GM12878 (cell line): ENCODE measurements at regions of chr6 and their contacts with region 1.

Region 1: DNA sequence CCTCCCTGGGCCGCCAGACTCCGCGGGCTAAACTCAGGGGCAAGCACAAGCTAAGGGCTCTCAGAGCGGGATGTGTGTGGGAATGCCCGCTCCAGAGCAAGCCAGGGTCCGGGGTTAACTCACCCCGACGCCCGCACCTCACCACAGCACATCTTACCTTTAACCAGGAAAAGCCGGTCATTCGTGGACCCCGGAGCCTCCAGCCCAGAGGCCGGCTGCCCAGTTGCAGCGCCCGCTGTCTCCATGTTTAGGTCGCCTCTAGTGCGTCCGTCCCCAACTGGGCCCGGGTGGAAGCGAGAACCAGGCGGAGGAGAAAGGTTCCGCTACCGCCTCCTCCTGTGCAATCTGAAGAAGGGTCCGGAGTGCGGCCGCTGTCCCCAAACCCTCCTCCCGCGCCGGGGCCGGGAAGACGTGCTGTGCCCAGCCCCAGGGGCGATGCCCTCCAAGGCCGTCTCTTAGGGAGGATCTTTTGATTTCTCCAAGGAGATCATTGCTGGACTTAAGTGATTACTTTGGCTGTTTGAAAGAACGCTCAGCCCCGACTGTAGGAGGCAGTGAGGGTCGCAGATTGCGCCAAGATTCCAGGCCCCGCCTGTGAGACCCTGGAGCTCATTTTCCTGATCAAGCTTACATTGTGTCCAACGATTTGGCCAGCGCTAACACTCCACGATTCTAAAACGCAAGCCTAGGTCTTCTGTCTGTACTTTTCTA is at the start of gene TMEM242:
- DNase-seq: peak; percentile 74
- ATAC-seq: peak; percentile 91
- H3K4me3 ChIP-seq: peak within 1 kb of the TSS; percentile 86
- H3K27ac ChIP-seq: peak within 1 kb of the TSS; percentile 49
- H3K4me1 ChIP-seq: peaks cover 9% of the 10 kb centered on the region
- H3K27me3 ChIP-seq: no peaks in the 10 kb centered on the region
- CTCF ChIP-seq: peak in 2 of 3 experiments; percentile 13 to 14; a peak in 1 of 6 replicates
- EP300 ChIP-seq: no peak
- POLR2A ChIP-seq: peak; percentile 96
- RAD21 ChIP-seq: no peak; the same call in 1 of the 2 replicates
- polyA plus RNA-seq, gene TMEM242: 6.1 to 6.2 TPM

Region 2: GRCh38 chr6:156866220-156867015 is 457.0 kb before region 1 on chr6:
- CTCF ChIA-PET with region 1: no interaction called
- POLR2A ChIA-PET with region 1: no interaction called
- RAD21 ChIA-PET with region 1: no interaction called
- SMC1A ChIA-PET with region 1: no interaction called
- in situ Hi-C with region 1: no loop called
- intact Hi-C with region 1: no loop called
- DNase-seq: no peak
- ATAC-seq: peak; percentile 85
- H3K4me3 ChIP-seq: 0 out of 2 replicates have a peak overlapping the region, but pooled peaks have one; percentile 18
- H3K27ac ChIP-seq: peak overlapping the region; percentile 45
- H3K4me1 ChIP-seq: peaks cover 31% of the 10 kb centered on the region
- H3K27me3 ChIP-seq: no peaks in the 10 kb centered on the region
- CTCF ChIP-seq: peak in 1 of 3 experiments; percentile 12; a peak in 1 of 6 replicates
- EP300 ChIP-seq: 0 out of 4 replicates have a peak, but pooled peaks of 1 of the 2 experiments have one; percentile 24
- POLR2A ChIP-seq: no peak
- RAD21 ChIP-seq: peak; percentile 41

Region 3: GRCh38 chr6:157298216-157298724 is 25.1 kb before region 1 on chr6:
- CTCF ChIA-PET with region 1: no interaction called
- POLR2A ChIA-PET with region 1: no interaction called
- RAD21 ChIA-PET with region 1: no interaction called
- SMC1A ChIA-PET with region 1: no interaction called
- in situ Hi-C with region 1: no loop called
- intact Hi-C with region 1: no loop called
- DNase-seq: no peak
- ATAC-seq: no peak
- H3K4me3 ChIP-seq: no peak overlapping the region
- H3K27ac ChIP-seq: no peak overlapping the region
- H3K4me1 ChIP-seq: no peaks in the 10 kb centered on the region
- H3K27me3 ChIP-seq: no peaks in the 10 kb centered on the region
- CTCF ChIP-seq: no peak
- EP300 ChIP-seq: no peak
- POLR2A ChIP-seq: no peak
- RAD21 ChIP-seq: no peak

Region 4: DNA sequence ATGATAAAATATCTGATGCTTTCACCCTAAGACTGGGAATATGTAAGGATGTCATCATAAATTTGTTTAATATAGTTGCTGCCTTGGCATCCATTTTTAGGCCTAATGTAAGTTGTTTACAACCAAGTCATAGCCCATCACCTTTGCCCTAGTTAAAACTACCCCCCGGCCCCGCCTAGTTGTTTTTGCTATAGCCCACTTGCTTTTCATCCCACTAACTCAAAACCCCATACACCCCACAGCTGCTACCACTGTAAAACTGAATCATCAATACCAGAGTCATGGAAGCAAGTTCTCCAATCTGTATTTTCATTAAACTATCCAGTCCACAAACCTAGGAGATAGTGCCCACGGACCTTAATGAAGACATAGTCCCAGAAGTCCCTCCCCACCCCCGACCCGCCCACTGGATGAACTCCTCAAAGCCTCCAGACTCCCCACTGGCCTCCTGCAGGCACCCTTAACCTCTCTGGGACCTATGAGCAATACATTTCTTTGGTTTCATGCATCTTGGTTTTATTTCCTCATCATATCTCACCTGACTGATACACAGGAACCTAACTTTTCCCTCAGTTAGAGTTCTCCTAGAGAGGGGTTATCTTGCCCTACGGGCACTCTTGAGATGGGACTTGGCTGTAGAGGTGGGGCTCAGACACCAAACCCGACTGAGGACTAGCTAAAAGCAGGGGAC is 45.1 kb after region 1 on chr6:
- CTCF ChIA-PET with region 1: interaction called, 4 read pairs
- POLR2A ChIA-PET with region 1: interaction called, 6 read pairs
- RAD21 ChIA-PET with region 1: interaction called, 13 read pairs
- SMC1A ChIA-PET with region 1: interaction called, 5 read pairs
- in situ Hi-C with region 1: no loop called
- intact Hi-C with region 1: loop called (anchors 2 kb)
- DNase-seq: no peak
- ATAC-seq: peak; percentile 49
- H3K4me3 ChIP-seq: no peak overlapping the region
- H3K27ac ChIP-seq: no peak overlapping the region
- H3K4me1 ChIP-seq: peaks cover 15% of the 10 kb centered on the region
- H3K27me3 ChIP-seq: peaks cover 0 to 12% of the 10 kb centered on the region in 2 experiments; a peak in 3 of 4 replicates
- CTCF ChIP-seq: no peak
- EP300 ChIP-seq: no peak
- POLR2A ChIP-seq: no peak
- RAD21 ChIP-seq: no peak

Region 5: GRCh38 chr6:157385482-157385881 is 62.1 kb after region 1 on chr6:
- CTCF ChIA-PET with region 1: interaction called, 17 read pairs
- POLR2A ChIA-PET with region 1: interaction called, 7 read pairs
- RAD21 ChIA-PET with region 1: interaction called, 20 read pairs
- SMC1A ChIA-PET with region 1: interaction called, 34 read pairs
- in situ Hi-C with region 1: no loop called
- intact Hi-C with region 1: loop called (anchors 2 kb)
- DNase-seq: peak; percentile 44
- ATAC-seq: peak; percentile 45
- H3K4me3 ChIP-seq: no peak overlapping the region
- H3K27ac ChIP-seq: no peak overlapping the region
- H3K4me1 ChIP-seq: no peaks in the 10 kb centered on the region
- H3K27me3 ChIP-seq: peaks cover 0 to 4% of the 10 kb centered on the region in 2 experiments; a peak in 1 of 4 replicates
- CTCF ChIP-seq: no peak
- EP300 ChIP-seq: peak; percentile 48 to 52; a peak in 2 of 4 replicates
- POLR2A ChIP-seq: no peak
- RAD21 ChIP-seq: no peak

Region 6: GRCh38 chr6:157571269-157571668 is 247.9 kb after region 1 on chr6:
- CTCF ChIA-PET with region 1: interaction called, 13 read pairs
- POLR2A ChIA-PET with region 1: interaction called, 5 read pairs
- RAD21 ChIA-PET with region 1: interaction called, 19 read pairs
- SMC1A ChIA-PET with region 1: interaction called, 7 read pairs
- in situ Hi-C with region 1: no loop called
- intact Hi-C with region 1: no loop called
- DNase-seq: peak; percentile 68
- ATAC-seq: peak; percentile 69
- H3K4me3 ChIP-seq: no peak overlapping the region
- H3K27ac ChIP-seq: peak overlapping the region; percentile 60
- H3K4me1 ChIP-seq: peaks cover 22% of the 10 kb centered on the region
- H3K27me3 ChIP-seq: no peaks in the 10 kb centered on the region
- CTCF ChIP-seq: 0 out of 6 replicates have a peak, but pooled peaks of 1 of the 3 experiments have one; percentile 9
- EP300 ChIP-seq: peak; percentile 16 to 84; a peak in 1 of 4 replicates
- POLR2A ChIP-seq: no peak
- RAD21 ChIP-seq: no peak

Region 7: DNA sequence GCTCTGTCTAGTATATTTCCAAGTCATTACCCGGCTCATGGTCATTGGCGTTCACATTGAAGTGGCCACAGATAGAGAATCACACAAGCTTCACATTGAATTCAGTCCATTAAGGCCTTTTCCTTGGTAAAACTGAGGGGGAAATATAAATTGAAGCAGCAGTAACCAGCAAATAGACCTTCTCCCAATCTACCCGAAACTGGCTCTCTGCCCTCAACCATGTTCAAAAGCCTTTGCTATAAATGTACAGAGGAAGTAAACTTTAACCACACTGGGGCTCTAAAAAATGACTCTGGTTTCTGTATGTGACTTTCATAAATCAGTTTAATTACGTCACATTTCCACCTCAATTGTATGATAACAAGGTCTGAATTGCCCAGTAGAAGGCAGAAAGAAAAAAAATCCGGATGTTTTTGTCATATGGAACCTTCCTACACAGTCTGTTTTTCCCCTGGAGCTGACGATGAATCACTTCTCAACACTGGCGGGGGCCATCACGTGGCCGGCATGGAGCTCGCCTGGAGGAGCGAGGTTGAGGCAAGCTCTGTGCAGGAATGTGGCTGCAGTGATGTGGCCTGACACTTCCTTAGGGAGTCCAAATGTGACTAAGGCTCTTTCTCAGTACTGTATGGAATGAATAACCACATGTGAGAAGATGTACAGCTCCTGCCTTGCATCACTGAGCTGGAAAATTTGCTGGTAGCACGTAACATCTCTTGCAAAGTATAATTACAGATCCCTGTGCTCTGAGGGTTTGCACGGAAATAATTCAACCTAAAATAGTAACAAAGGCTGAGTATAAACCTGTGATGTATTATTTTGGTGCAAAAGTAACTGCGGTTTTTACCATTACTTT is 441.0 kb after region 1 on chr6:
- CTCF ChIA-PET with region 1: no interaction called
- POLR2A ChIA-PET with region 1: no interaction called
- RAD21 ChIA-PET with region 1: interaction called, 3 read pairs
- SMC1A ChIA-PET with region 1: no interaction called
- in situ Hi-C with region 1: no loop called
- intact Hi-C with region 1: loop called (anchors 5 kb)
- DNase-seq: peak; percentile 95
- ATAC-seq: peak; percentile 68
- H3K4me3 ChIP-seq: peak overlapping the region; percentile 53; the same call in 1 of the 2 replicates
- H3K27ac ChIP-seq: peak overlapping the region; percentile 76
- H3K4me1 ChIP-seq: peaks cover 72% of the 10 kb centered on the region
- H3K27me3 ChIP-seq: no peaks in the 10 kb centered on the region
- CTCF ChIP-seq: no peak
- EP300 ChIP-seq: peak; percentile 96 to 97
- POLR2A ChIP-seq: no peak
- RAD21 ChIP-seq: 0 out of 2 replicates have a peak, but pooled peaks have one; percentile 2